ENCODE measurements at regions of chr2 and their contacts with region 1.

Region 1: GRCh38 chr2:74334931-74335333 is 8.3 kb downstream of the SLC4A5 start:
- DNase-seq: peak; percentile 85
- ATAC-seq: peak; percentile 93
- H3K4me3 Mint-ChIP-seq: no peak overlapping the region
- H3K27ac Mint-ChIP-seq: no peak overlapping the region
- H3K4me1 Mint-ChIP-seq: no peaks in the 10 kb centered on the region
- H3K27me3 Mint-ChIP-seq: peaks cover 10% of the 10 kb centered on the region
- CTCF ChIP-seq: peak; percentile 90

Region 2: GRCh38 chr2:72694715-72695496 is 1640.0 kb before region 1 on chr2:
- CTCF ChIA-PET with region 1: no interaction called
- POLR2A ChIA-PET with region 1: no interaction called
- DNase-seq: no peak
- ATAC-seq: peak; percentile 63
- H3K4me3 Mint-ChIP-seq: no peak overlapping the region
- H3K27ac Mint-ChIP-seq: peak overlapping the region; percentile 79; the same call in 1 of the 2 replicates
- H3K4me1 Mint-ChIP-seq: peaks cover 14% of the 10 kb centered on the region
- H3K27me3 Mint-ChIP-seq: no peaks in the 10 kb centered on the region
- CTCF ChIP-seq: no peak

Region 3: DNA sequence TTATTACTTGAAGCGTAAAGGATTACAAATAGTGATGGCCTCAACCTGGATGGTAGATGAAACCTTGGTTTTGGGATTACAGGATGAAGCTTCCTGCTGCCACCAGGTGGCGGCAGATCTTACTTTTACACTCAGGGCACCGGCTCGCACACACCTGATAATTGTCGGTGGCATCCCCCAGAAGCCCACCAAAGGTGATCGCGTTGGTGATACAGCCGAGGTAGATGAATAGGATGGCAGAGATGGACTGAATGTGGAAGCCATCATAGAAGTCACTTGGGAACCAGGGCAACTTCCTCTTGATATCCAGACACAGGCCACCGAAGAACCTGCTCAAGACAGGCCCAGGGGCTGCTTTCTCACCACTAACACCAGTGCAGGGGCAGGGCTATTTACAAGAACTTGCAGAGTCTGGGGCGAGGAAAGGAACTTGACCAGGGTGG is 84.7 kb before region 1 on chr2:
- CTCF ChIA-PET with region 1: interaction called, 35 read pairs
- POLR2A ChIA-PET with region 1: no interaction called
- DNase-seq: peak; percentile 52
- ATAC-seq: peak; percentile 85
- H3K4me3 Mint-ChIP-seq: no peak overlapping the region
- H3K27ac Mint-ChIP-seq: no peak overlapping the region
- H3K4me1 Mint-ChIP-seq: no peaks in the 10 kb centered on the region
- H3K27me3 Mint-ChIP-seq: peaks cover 7% of the 10 kb centered on the region; the same call in 1 of the 2 replicates
- CTCF ChIP-seq: peak; percentile 55

Region 4: GRCh38 chr2:74290466-74291217 is 44.3 kb before region 1 on chr2:
- CTCF ChIA-PET with region 1: interaction called, 12 read pairs
- POLR2A ChIA-PET with region 1: no interaction called
- DNase-seq: no peak
- ATAC-seq: no peak
- H3K4me3 Mint-ChIP-seq: no peak overlapping the region
- H3K27ac Mint-ChIP-seq: no peak overlapping the region
- H3K4me1 Mint-ChIP-seq: no peaks in the 10 kb centered on the region
- H3K27me3 Mint-ChIP-seq: peaks cover 3% of the 10 kb centered on the region
- CTCF ChIP-seq: no peak

Region 5: GRCh38 chr2:74345272-74345943 is 10.5 kb after region 1 on chr2:
- CTCF ChIA-PET with region 1: interaction called, 44 read pairs
- POLR2A ChIA-PET with region 1: no interaction called
- DNase-seq: no peak
- ATAC-seq: peak; percentile 57
- H3K4me3 Mint-ChIP-seq: no peak overlapping the region
- H3K27ac Mint-ChIP-seq: no peak overlapping the region
- H3K4me1 Mint-ChIP-seq: no peaks in the 10 kb centered on the region
- H3K27me3 Mint-ChIP-seq: peaks cover 29% of the 10 kb centered on the region
- CTCF ChIP-seq: no peak

Region 6: GRCh38 chr2:74391580-74392448 is 56.9 kb after region 1 on chr2:
- CTCF ChIA-PET with region 1: interaction called, 36 read pairs
- POLR2A ChIA-PET with region 1: no interaction called
- DNase-seq: peak; percentile 96
- ATAC-seq: peak; percentile 87
- H3K4me3 Mint-ChIP-seq: no peak overlapping the region; the same call in 1 of the 2 replicates
- H3K27ac Mint-ChIP-seq: peak overlapping the region; percentile 99
- H3K4me1 Mint-ChIP-seq: peaks cover 4% of the 10 kb centered on the region; the same call in 1 of the 2 replicates
- H3K27me3 Mint-ChIP-seq: no peaks in the 10 kb centered on the region; the same call in none of the 2 replicates
- CTCF ChIP-seq: peak; percentile 92

Measured in WTC11 (cell line).